ENCODE measurements at regions of chr2 and their contacts with region 1.

Region 1: GRCh38 chr2:65576861-65577601 is 144.6 kb upstream of the SPRED2 start:
- DNase-seq: no peak
- H3K4me3 ChIP-seq: no peak overlapping the region
- H3K27ac ChIP-seq: no peak overlapping the region
- H3K4me1 ChIP-seq: no peaks in the 10 kb centered on the region
- CTCF ChIP-seq: no peak

Region 2: GRCh38 chr2:64666810-64667438 is 910.1 kb before region 1 on chr2:
- CTCF ChIA-PET with region 1: no interaction called
- POLR2A ChIA-PET with region 1: no interaction called
- intact Hi-C with region 1: no loop called
- DNase-seq: peak; percentile 79
- H3K4me3 ChIP-seq: peak overlapping the region; percentile 45
- H3K27ac ChIP-seq: peak overlapping the region; percentile 95
- H3K4me1 ChIP-seq: peaks cover 77% of the 10 kb centered on the region
- CTCF ChIP-seq: no peak

Region 3: GRCh38 chr2:65064728-65065552 is 512.1 kb before region 1 on chr2:
- CTCF ChIA-PET with region 1: no interaction called
- POLR2A ChIA-PET with region 1: interaction called, 4 read pairs
- intact Hi-C with region 1: loop called (anchors 1 kb)
- DNase-seq: peak; percentile 88
- H3K4me3 ChIP-seq: peak overlapping the region; percentile 43
- H3K27ac ChIP-seq: peak overlapping the region; percentile 67
- H3K4me1 ChIP-seq: peaks cover 46% of the 10 kb centered on the region
- CTCF ChIP-seq: peak; percentile 89

Region 4: DNA sequence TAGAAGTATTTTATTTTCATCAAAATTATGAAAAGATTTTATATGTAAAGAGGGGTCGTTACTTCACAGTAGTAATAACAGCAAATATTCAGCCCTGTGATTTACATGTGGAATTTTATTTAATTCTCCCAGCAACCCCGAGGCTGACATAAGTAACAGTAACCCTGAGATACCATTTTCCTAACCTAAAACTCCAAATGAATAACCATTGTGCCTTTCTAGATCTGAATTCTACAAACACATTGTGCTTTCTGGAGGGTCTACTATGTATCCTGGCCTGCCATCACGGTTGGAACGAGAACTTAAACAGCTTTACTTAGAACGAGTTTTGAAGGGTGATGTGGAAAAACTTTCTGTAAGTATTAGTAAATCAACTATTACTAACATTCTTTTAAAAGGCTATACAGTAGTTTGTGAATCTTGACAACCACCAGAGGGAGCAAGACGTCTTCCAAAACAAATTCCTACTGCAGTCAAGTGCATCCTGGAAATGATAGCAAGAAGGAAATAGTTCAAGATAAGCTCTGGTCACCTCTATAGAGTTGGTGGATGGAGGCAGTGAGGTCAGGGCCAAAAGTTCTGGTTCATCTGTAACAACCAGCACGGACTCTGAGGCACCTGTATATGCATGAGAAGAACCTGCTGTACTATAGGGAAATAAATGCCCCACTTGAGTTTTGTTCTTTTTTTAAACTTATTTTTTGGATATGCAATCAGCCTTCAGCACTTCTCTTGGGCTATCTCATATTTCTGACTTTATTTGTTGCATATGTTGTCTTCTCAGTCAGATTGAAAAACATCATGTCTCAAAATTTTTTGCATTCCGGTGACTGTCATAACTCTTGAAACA is 312.0 kb before region 1 on chr2:
- CTCF ChIA-PET with region 1: no interaction called
- POLR2A ChIA-PET with region 1: interaction called, 3 read pairs
- intact Hi-C with region 1: loop called (anchors 2 kb)
- DNase-seq: peak; percentile 76
- H3K4me3 ChIP-seq: no peak overlapping the region
- H3K27ac ChIP-seq: no peak overlapping the region
- H3K4me1 ChIP-seq: peaks cover 9% of the 10 kb centered on the region
- CTCF ChIP-seq: peak; percentile 98

Region 5: DNA sequence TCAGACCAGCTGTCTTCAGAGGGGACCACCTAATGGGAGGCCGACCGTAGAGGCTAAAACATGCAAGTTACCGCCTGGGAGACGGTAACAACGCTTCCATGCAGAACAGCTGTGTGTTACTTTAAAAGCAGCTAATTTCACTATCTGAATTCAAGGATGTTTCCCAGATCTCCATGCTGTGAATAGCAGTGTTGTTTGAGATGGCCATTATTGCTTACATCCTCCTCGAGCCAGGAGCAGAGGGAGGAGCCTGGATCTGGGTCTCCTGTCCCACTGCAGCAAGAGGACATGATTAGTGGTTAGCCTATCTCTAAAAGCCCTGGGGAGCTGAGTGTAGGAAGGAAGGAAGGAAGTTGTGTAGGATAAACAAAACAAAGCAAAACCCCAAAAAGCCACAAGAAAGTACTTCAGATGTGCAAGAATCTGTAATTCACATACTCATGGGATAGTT is 298.5 kb before region 1 on chr2:
- CTCF ChIA-PET with region 1: no interaction called
- POLR2A ChIA-PET with region 1: no interaction called
- intact Hi-C with region 1: loop called (anchors 5 kb)
- DNase-seq: no peak
- H3K4me3 ChIP-seq: no peak overlapping the region
- H3K27ac ChIP-seq: no peak overlapping the region
- H3K4me1 ChIP-seq: peaks cover 17% of the 10 kb centered on the region
- CTCF ChIP-seq: no peak

Region 6: DNA sequence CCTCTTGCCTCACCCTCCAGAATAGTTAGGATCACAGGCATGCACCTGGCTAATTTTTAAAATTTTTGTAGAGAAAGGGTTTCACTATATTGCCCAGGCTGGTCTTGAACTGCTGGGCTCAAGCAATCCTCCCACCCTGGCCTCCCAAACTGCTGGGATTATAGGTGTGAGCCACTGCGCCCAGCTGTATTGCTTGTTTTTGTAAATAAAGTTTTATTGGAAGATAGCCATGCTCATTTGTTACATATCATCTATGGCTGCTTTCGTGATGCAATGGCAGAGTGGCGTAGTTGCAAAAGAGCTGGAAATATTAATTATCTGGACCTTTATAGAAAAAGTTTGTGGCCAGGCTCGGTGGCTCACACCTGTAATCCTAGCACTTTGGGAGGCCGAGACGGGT is 35.3 kb before region 1 on chr2:
- CTCF ChIA-PET with region 1: no interaction called
- POLR2A ChIA-PET with region 1: no interaction called
- intact Hi-C with region 1: loop called (anchors 1 kb)
- DNase-seq: no peak
- H3K4me3 ChIP-seq: no peak overlapping the region
- H3K27ac ChIP-seq: no peak overlapping the region
- H3K4me1 ChIP-seq: peaks cover 27% of the 10 kb centered on the region
- CTCF ChIP-seq: no peak

Region 7: DNA sequence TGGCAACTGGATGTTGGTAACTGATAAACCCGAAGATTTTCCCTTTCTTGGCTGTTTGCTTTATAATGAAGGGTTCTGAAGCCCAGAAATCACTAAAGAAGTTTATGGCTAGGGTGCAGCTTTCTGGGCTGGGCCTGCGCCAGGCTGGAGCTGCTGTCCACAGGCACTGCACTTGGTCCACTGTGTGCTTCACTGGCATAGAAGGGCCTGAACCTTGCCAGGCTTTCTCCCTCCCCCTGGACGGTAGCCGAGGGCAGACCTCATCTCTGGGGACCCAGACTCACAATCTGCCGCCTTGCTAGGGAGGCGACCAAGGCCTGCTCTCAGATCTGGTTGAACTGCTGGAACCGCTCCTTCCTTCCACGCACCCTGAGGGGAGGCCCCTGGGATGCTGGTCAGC is 11.3 kb before region 1 on chr2:
- CTCF ChIA-PET with region 1: no interaction called
- POLR2A ChIA-PET with region 1: no interaction called
- intact Hi-C with region 1: no loop called
- DNase-seq: no peak
- H3K4me3 ChIP-seq: no peak overlapping the region
- H3K27ac ChIP-seq: no peak overlapping the region
- H3K4me1 ChIP-seq: no peaks in the 10 kb centered on the region
- CTCF ChIP-seq: no peak

Region 8: GRCh38 chr2:65666156-65666725 is 89.2 kb after region 1 on chr2:
- CTCF ChIA-PET with region 1: no interaction called
- POLR2A ChIA-PET with region 1: no interaction called
- intact Hi-C with region 1: no loop called
- DNase-seq: no peak
- H3K4me3 ChIP-seq: no peak overlapping the region
- H3K27ac ChIP-seq: no peak overlapping the region
- H3K4me1 ChIP-seq: no peaks in the 10 kb centered on the region
- CTCF ChIP-seq: no peak

Measured in OCI-LY7 (cell line).